ENCODE measurements at regions of chr14 and their contacts with region 1.

Region 1: GRCh38 chr14:52961060-52961639 is 10.3 kb upstream of the FERMT2 start:
- DNase-seq: peak; percentile 30 to 52 (median 51)
- ATAC-seq: peak; percentile 87 to 92
- H3K4me3 ChIP-seq: no peak overlapping the region
- H3K27ac ChIP-seq: peak overlapping the region; percentile 12
- H3K4me1 ChIP-seq: no peaks in the 10 kb centered on the region
- H3K27me3 ChIP-seq: no peaks in the 10 kb centered on the region

Region 2: GRCh38 chr14:52514046-52514811 is 446.9 kb before region 1 on chr14:
- intact Hi-C with region 1: no loop called
- DNase-seq: no peak
- ATAC-seq: no peak
- H3K4me3 ChIP-seq: no peak overlapping the region
- H3K27ac ChIP-seq: no peak overlapping the region
- H3K4me1 ChIP-seq: no peaks in the 10 kb centered on the region
- H3K27me3 ChIP-seq: no peaks in the 10 kb centered on the region

Region 3: GRCh38 chr14:53044486-53044885 is 83.3 kb after region 1 on chr14:
- intact Hi-C with region 1: loop called in 1 of 4 experiments (anchors 10 kb)
- DNase-seq: no peak
- ATAC-seq: no peak
- H3K4me3 ChIP-seq: no peak overlapping the region
- H3K27ac ChIP-seq: no peak overlapping the region
- H3K4me1 ChIP-seq: no peaks in the 10 kb centered on the region
- H3K27me3 ChIP-seq: no peaks in the 10 kb centered on the region